Common myeloid progenitor, CD34-positive (primary cell): ENCODE measurements at regions of chr14 and their contacts with region 1.

Region 1: GRCh38 chr14:91373591-91374254 is 43.9 kb downstream of the CCDC88C start:
- DNase-seq: peak in 2 of 3 donors; percentile 76 to 83
- H3K4me3 ChIP-seq: peak overlapping the region in 4 of 7 experiments; percentile 11 to 54 (median 42)
- H3K27ac ChIP-seq: peak overlapping the region in 1 of 2 experiments; percentile 55
- H3K4me1 ChIP-seq: peaks cover 19 to 95% (median 80%) of the 10 kb centered on the region in 4 experiments
- H3K27me3 ChIP-seq: no peaks in the 10 kb centered on the region

Region 2: DNA sequence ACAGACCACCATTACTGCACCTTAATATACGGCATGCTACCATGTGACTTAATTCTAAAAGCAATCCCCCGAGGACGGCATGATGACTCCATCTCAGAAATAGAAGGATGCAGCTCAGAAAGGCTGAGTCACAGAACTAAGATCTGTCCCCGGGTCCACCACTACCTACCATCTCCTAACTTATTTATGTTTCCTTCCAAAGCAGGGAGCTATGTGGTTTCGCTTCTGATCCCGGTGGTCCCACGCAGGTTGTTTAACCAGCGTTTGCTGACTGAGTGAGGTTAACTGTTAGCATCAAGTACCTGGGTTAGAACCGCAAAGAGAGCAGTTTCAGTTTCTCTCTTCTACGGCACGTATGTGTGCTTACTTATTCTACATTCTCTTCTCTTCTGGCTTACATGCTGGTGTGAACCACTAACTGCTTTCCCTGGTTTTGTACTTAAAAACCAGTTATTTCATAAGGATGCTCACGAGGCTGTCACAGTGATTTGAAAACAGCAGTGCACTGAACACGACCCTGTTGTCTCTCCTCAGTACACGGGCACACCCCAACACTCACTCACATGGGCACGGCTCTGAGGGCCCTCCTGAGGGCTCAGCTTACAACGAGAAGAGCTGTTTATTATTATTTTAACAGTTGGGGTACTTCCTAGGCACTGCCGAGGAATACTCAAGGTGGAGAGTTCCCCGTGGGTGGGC is 22.8 kb before region 1 on chr14:
- CTCF ChIA-PET with region 1: interaction called, 11 read pairs
- POLR2A ChIA-PET with region 1: no interaction called
- DNase-seq: peak; percentile 56 to 87 (median 84)
- H3K4me3 ChIP-seq: peak overlapping the region in 6 of 7 experiments; percentile 2 to 78 (median 38)
- H3K27ac ChIP-seq: no peak overlapping the region
- H3K4me1 ChIP-seq: peaks cover 4 to 48% (median 34%) of the 10 kb centered on the region in 4 experiments
- H3K27me3 ChIP-seq: no peaks in the 10 kb centered on the region

Region 3: GRCh38 chr14:91388551-91388975 is 14.8 kb after region 1 on chr14:
- CTCF ChIA-PET with region 1: interaction called, 11 read pairs
- POLR2A ChIA-PET with region 1: no interaction called
- DNase-seq: peak in 2 of 3 donors; percentile 78 to 84
- H3K4me3 ChIP-seq: no peak overlapping the region
- H3K27ac ChIP-seq: no peak overlapping the region
- H3K4me1 ChIP-seq: peaks cover 4 to 37% (median 34%) of the 10 kb centered on the region in 4 experiments
- H3K27me3 ChIP-seq: no peaks in the 10 kb centered on the region

Region 4: GRCh38 chr14:91396959-91397815 is 23.5 kb after region 1 on chr14:
- CTCF ChIA-PET with region 1: interaction called, 23 read pairs
- POLR2A ChIA-PET with region 1: no interaction called
- DNase-seq: peak in 2 of 3 donors; percentile 40 to 66
- H3K4me3 ChIP-seq: peak overlapping the region in 5 of 7 experiments; percentile 0 to 49 (median 20)
- H3K27ac ChIP-seq: peak overlapping the region in 1 of 2 experiments; percentile 32
- H3K4me1 ChIP-seq: peaks cover 10 to 87% (median 80%) of the 10 kb centered on the region in 4 experiments
- H3K27me3 ChIP-seq: no peaks in the 10 kb centered on the region